ENCODE measurements at regions of chr11 and their contacts with region 1.

Region 1: DNA sequence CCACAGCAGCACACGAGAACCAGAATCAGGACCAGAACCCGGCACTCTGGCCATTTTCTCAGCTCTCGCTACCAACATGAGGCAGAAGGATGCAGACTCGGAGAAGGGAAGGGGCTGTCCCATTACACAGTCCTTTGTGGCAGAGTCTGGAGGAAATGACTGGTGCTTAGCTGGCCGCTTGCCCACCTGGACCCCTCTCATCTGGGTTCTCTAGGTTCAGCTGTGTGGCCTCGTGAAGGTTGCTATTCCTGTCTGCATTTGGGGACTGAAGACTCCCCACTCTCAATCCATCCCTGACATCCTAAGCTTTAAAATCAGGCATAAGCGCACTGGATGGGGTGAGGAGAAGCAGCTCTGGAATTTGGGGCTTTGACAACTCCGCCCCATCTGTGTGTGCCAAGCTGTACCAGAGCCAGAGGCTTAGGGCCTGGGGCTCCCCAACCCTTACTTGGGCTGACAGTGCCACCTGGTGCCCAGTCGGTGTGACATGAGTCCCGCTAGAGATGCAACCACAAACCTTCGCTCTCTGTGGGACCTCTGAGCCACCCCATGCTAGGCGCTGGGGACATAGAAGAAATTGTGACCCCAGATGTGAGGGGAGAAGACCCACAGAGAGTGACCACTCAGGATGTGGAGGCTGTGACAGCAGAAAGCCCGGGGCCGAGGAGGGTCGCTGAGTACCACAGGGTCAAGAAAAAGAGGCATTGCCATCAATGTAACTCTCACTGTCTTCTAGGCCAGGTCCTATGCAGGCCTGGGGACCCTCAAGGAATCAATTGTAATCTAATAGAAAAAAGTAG is 35.9 kb upstream of the FCHSD2 start:
- DNase-seq: peak; percentile 85 to 92 (median 91)
- H3K4me3 ChIP-seq: peak overlapping the region in 2 of 7 experiments; percentile 20 to 23
- H3K27ac ChIP-seq: peak overlapping the region in 1 of 2 experiments; percentile 35
- H3K4me1 ChIP-seq: peaks cover 0 to 25% (median 17%) of the 10 kb centered on the region in 4 experiments
- H3K27me3 ChIP-seq: no peaks in the 10 kb centered on the region

Region 2: GRCh38 chr11:72918851-72919250 is 259.1 kb before region 1 on chr11:
- CTCF ChIA-PET with region 1: interaction called, 72 read pairs
- POLR2A ChIA-PET with region 1: no interaction called
- DNase-seq: no peak
- H3K4me3 ChIP-seq: no peak overlapping the region
- H3K27ac ChIP-seq: no peak overlapping the region
- H3K4me1 ChIP-seq: no peaks in the 10 kb centered on the region
- H3K27me3 ChIP-seq: no peaks in the 10 kb centered on the region

Region 3: GRCh38 chr11:73141848-73142286 is 36.1 kb before region 1 on chr11:
- CTCF ChIA-PET with region 1: interaction called, 108 read pairs
- POLR2A ChIA-PET with region 1: interaction called, 37 read pairs
- DNase-seq: peak; percentile 83 to 91 (median 84)
- H3K4me3 ChIP-seq: peak overlapping the region; percentile 86 to 98 (median 93)
- H3K27ac ChIP-seq: peak overlapping the region; percentile 90 to 95
- H3K4me1 ChIP-seq: peaks cover 44 to 78% (median 67%) of the 10 kb centered on the region in 4 experiments
- H3K27me3 ChIP-seq: no peaks in the 10 kb centered on the region

Region 4: DNA sequence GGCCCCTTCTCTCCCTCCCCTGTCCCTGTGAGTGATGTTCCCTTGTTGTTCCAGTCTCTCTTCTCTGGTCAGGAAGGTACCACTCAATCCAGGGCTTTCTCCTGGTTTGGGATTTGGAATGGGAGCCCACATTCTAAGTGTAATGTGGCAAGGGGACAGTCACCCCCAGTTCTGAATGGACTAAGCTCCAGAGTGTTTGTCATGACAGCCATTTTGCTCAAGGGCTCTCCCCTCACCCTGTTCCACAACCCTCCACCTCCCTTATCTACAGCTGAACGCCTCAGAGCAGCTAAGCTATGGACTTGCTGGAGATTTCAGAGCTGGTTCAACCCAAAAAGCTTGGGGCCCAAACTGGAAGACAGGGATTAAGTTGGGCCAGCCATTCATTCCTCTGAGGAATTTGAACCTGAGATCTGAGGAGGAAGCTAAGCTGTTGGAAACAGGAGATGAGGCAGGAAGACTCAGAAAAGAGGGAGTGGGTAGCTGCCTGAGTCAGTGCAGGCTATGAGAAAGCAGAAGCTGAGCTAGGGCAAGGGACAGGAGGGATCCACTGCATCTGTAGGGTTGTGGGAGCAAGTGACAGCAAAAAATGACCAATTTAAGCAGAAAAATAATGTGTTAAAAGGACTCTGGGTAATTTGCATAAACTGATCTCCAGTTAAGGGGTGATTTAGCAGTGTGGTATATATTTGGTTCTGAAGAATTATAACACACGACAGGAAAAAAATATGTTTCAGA is 13.0 kb before region 1 on chr11:
- CTCF ChIA-PET with region 1: interaction called, 103 read pairs
- POLR2A ChIA-PET with region 1: no interaction called
- DNase-seq: peak in 2 of 3 donors; percentile 50 to 63
- H3K4me3 ChIP-seq: no peak overlapping the region
- H3K27ac ChIP-seq: no peak overlapping the region
- H3K4me1 ChIP-seq: peaks cover 5 to 44% (median 17%) of the 10 kb centered on the region in 4 experiments
- H3K27me3 ChIP-seq: no peaks in the 10 kb centered on the region